Pancreas (tissue), 10 donors: ENCODE measurements at regions of chr5 and their contacts with region 1.

Region 1: DNA sequence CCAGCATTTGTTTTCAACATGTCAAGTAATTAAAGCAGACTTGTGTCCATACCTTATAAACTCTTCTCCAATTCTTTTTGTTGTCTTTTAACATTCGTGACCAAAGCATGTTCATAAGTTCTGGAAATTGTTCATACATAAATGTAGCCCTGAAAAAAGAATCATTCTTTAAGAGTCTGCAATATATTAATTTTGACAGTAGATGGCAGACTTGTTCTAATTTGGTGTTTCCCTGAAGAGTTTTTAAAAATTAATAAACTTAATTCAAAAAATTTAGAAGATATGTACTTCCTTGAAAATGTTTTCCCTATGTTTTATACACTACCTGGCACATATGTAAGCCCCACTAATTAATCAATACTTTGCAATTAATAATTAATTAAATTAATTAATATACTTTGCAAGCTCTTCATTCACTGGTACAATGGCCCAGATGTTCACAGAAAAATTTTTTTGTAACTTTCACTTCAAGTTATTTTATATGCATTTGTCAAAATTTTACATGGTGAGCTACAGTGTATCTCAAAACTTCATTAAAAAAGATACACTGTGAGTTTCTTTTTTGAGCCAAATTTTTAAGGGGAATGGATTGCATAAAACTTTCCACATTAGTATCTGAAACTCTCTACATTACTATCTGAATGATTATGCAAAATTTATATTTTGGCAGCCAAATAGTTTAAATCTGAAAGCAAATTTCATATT is 42.1 kb downstream of the CLINT1 start:
- DNase-seq: no peak
- ATAC-seq: peak in 3 of 4 donors; percentile 57 to 65 (median 64)
- H3K4me3 ChIP-seq: no peak overlapping the region
- H3K27ac ChIP-seq: no peak overlapping the region
- H3K4me1 ChIP-seq: peaks cover 0 to 8% (median 4%) of the 10 kb centered on the region in 3 donors
- H3K27me3 ChIP-seq: no peaks in the 10 kb centered on the region
- CTCF ChIP-seq: peak in 3 of 4 donors; percentile 15 to 45 (median 39)

Region 2: DNA sequence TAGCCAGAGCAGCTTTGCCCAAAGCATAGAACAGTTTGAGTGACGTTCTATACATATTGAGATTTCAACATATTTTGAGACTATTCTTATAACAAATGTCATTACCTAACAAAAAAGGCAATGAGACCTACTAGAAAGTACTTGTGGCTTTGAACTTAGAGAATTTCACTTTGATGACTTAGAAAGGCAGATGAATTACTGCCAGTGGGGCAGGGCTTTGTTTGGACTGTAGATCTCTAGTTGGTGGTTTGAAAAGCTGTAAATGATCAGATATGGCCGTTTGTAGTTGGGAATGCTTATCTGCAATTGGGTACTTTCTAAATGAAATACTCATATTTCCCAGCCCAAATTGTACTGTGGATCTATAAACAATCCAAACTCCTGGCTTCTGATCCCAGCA is 192.7 kb before region 1 on chr5:
- intact Hi-C with region 1: no loop called
- DNase-seq: no peak
- ATAC-seq: no peak
- H3K4me3 ChIP-seq: no peak overlapping the region
- H3K27ac ChIP-seq: no peak overlapping the region
- H3K4me1 ChIP-seq: no peaks in the 10 kb centered on the region
- H3K27me3 ChIP-seq: no peaks in the 10 kb centered on the region
- CTCF ChIP-seq: no peak

Region 3: DNA sequence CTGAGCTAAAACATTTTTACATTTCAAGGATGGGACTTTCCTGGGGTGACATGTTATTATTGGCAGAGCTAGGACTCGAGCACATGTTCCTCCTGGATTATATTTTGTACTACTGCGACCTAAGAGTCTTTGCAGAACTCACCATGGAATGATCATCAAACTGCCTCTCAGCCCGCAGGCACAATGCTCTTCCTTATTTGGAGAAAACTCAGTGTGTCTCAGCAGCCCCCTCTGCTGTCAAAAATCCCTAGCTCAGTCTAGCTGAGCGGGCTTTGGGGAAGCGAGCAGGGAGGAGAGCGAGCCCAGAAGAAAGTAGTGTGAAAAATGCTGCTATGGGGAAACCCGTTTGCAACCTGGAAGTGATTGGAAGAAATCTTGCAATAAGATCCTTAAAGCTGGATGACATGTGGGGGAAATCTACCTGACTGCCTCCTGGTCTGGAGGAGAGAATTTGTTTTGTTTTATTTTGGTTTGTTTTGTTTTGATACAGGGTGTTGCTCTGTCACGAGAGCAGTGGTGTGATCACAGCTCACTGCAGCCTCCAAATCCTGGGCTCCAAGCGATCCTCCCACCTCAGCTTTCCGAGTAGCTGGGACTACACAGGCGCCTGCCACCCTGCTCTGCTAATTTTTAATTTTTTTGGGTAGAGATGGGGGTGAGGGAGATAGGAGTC is 132.0 kb after region 1 on chr5:
- intact Hi-C with region 1: loop called in 2 of 3 experiments (anchors 10 kb)
- DNase-seq: peak; percentile 70 to 89 (median 81)
- ATAC-seq: peak; percentile 98 to 100 (median 100)
- H3K4me3 ChIP-seq: no peak overlapping the region
- H3K27ac ChIP-seq: no peak overlapping the region
- H3K4me1 ChIP-seq: no peaks in the 10 kb centered on the region
- H3K27me3 ChIP-seq: no peaks in the 10 kb centered on the region
- CTCF ChIP-seq: peak; percentile 62 to 76 (median 73)